WTC11 (cell line): ENCODE measurements at regions of chr2 and their contacts with region 1.

Region 1: GRCh38 chr2:177148477-177149154 is 64.0 kb upstream of the HNRNPA3 start:
- DNase-seq: peak; percentile 88
- ATAC-seq: peak; percentile 97
- H3K4me3 Mint-ChIP-seq: peak overlapping the region; percentile 79
- H3K27ac Mint-ChIP-seq: no peak overlapping the region; the same call in 1 of the 2 replicates
- H3K4me1 Mint-ChIP-seq: peaks cover 31% of the 10 kb centered on the region
- H3K27me3 Mint-ChIP-seq: peaks cover 9% of the 10 kb centered on the region; the same call in 1 of the 2 replicates
- CTCF ChIP-seq: peak; percentile 81

Region 2: DNA sequence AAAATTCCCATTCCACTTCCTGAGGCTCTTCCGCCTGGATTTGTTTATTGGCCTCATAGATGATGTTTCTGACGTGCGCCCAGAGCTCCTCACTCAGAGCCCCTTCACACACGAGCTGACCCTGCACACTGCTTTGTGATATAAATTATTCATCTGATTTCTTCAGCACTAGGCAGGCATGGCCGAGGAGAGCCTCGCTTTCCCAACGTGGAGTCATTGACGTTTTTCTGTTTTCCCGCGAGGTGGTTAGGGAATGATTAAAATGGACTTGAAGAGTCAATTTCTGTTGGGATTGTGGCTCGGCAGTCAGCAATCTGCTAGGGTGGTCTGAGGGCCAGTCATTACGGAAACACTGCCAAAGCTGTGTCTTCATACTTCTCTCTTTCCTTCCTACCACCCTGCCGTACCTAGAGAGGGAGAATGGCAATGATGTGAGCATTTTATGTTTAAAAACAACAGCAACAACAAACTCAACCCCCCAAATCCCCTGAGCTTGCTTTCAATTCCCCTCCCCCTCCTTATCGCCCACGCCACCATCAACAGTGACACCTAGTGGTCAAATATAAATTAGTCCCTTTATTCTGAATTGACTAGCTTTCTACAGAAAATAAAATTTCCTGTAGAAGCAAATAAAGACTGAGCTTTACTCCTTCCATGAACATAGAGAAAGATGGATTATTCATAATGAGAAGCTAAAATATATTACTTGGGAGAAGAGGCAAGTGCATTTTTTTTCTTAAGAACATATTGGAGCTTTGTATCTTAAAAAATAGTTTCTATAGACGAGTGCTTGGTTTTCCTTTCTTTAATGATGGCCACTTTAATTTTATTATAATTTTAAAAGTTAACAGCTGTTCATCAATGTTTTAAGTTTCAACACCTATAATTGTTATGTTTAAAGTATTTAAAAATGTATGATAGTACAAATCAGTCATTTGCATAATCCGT is 594.2 kb before region 1 on chr2:
- CTCF ChIA-PET with region 1: interaction called, 11 read pairs
- POLR2A ChIA-PET with region 1: no interaction called
- DNase-seq: no peak
- ATAC-seq: peak; percentile 35; the same call in 1 of the 2 replicates
- H3K4me3 Mint-ChIP-seq: peak overlapping the region; percentile 61
- H3K27ac Mint-ChIP-seq: no peak overlapping the region
- H3K4me1 Mint-ChIP-seq: peaks cover 22% of the 10 kb centered on the region
- H3K27me3 Mint-ChIP-seq: peaks cover 43% of the 10 kb centered on the region
- CTCF ChIP-seq: no peak; the same call in 1 of the 2 replicates

Region 3: DNA sequence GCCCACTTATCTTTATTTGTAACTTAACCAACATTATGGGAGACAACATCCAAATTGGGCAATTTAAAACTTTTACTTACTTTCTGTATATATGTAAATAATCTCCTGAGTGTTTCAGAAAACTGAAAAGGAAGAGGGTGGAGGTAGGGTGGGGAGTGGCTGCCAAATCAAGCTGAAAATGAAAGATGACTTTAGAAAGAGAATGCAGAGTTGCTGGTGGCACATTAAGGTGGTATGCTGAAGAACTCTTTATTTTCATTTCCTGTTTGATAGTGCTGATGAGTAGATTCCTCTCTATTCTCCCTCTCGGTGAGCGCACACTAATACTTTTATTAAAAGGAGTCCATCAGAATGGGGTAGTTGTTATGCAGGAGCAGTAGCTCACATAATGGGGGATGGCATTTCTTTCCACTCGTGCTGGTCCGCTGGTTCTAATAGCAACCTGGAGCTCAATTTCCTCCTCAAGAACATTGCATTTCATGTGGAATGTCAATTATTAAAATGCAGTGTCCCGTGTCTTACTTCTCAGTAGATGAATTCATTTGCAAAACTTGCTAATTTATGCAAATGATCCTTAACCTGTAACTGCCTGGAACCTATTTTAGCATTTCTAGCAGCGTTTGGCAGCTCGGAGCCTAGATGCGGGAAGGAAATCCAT is 402.9 kb before region 1 on chr2:
- CTCF ChIA-PET with region 1: interaction called, 10 read pairs
- POLR2A ChIA-PET with region 1: no interaction called
- DNase-seq: no peak
- ATAC-seq: peak; percentile 68
- H3K4me3 Mint-ChIP-seq: peak overlapping the region; percentile 49
- H3K27ac Mint-ChIP-seq: peak overlapping the region; percentile 95
- H3K4me1 Mint-ChIP-seq: peaks cover 58% of the 10 kb centered on the region
- H3K27me3 Mint-ChIP-seq: no peaks in the 10 kb centered on the region
- CTCF ChIP-seq: no peak

Region 4: DNA sequence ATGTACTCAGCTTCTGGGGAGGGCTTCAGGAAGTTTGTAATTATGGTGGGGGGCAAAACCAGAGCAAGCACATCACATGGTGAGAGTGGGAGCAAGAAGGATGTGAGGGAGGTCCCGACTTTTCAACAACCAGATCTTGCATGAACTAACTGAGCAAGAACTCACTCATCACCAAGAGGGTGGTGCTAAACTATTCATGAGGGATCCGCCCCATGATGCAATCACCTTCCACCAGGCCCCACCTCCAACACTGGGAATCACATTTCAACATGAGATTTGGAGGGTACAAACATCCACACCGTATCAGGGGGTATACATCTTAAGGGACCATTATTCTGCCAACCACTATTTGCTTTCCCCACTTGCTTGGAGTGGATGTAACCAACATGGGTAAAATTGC is 145.6 kb before region 1 on chr2:
- CTCF ChIA-PET with region 1: no interaction called
- POLR2A ChIA-PET with region 1: no interaction called
- DNase-seq: no peak
- ATAC-seq: no peak
- H3K4me3 Mint-ChIP-seq: no peak overlapping the region
- H3K27ac Mint-ChIP-seq: no peak overlapping the region
- H3K4me1 Mint-ChIP-seq: peaks cover 12% of the 10 kb centered on the region
- H3K27me3 Mint-ChIP-seq: no peaks in the 10 kb centered on the region
- CTCF ChIP-seq: no peak

Region 5: DNA sequence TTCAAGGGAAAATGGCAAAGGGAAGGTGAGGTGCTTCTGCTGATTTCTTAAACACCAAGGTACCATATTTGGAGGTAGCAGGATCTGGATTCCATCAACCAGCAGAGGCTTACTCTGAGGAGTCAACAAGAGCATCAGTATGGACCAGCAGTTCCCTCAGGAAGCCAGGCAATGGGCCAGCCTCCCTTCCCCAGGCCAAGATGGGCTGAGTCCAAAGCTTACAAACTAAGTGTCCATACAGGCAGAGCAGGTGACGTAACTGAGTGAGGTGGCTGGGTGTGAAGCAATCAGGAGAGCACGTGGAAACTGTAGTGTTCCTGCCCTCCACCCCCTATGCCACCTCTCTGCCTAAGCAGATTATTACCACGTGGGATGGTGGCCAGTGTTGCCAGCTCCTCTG is 70.2 kb before region 1 on chr2:
- CTCF ChIA-PET with region 1: interaction called, 11 read pairs
- POLR2A ChIA-PET with region 1: no interaction called
- DNase-seq: no peak
- ATAC-seq: no peak
- H3K4me3 Mint-ChIP-seq: no peak overlapping the region
- H3K27ac Mint-ChIP-seq: no peak overlapping the region
- H3K4me1 Mint-ChIP-seq: peaks cover 14% of the 10 kb centered on the region
- H3K27me3 Mint-ChIP-seq: peaks cover 3% of the 10 kb centered on the region; the same call in 1 of the 2 replicates
- CTCF ChIP-seq: no peak

Region 6: DNA sequence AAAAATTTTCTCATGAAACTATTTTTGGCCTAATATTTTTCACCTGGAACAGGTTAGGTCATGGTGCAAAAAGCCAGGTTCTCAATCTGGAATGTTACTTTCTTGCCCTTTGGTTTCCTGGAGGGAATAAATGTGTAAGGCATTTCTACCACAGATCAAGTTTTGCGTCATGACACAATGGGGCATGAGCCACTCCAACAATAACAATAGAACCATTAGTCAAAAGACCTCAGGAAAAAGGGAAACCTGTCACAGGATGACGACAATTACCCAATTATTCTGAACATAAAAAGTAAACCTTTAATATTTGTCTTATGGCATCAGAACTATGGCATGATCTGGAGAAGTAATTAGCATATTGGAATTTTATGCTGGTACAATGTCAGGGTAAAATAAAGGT is 24.2 kb before region 1 on chr2:
- CTCF ChIA-PET with region 1: interaction called, 23 read pairs
- POLR2A ChIA-PET with region 1: no interaction called
- DNase-seq: no peak
- ATAC-seq: no peak
- H3K4me3 Mint-ChIP-seq: no peak overlapping the region
- H3K27ac Mint-ChIP-seq: no peak overlapping the region
- H3K4me1 Mint-ChIP-seq: peaks cover 11% of the 10 kb centered on the region
- H3K27me3 Mint-ChIP-seq: no peaks in the 10 kb centered on the region
- CTCF ChIP-seq: no peak

Region 7: GRCh38 chr2:177195194-177195593 is 46.6 kb after region 1 on chr2:
- CTCF ChIA-PET with region 1: interaction called, 16 read pairs
- POLR2A ChIA-PET with region 1: no interaction called
- DNase-seq: no peak
- ATAC-seq: peak; percentile 90
- H3K4me3 Mint-ChIP-seq: no peak overlapping the region
- H3K27ac Mint-ChIP-seq: no peak overlapping the region
- H3K4me1 Mint-ChIP-seq: no peaks in the 10 kb centered on the region
- H3K27me3 Mint-ChIP-seq: no peaks in the 10 kb centered on the region; the same call in 1 of the 2 replicates
- CTCF ChIP-seq: no peak